Activated CD8-positive, alpha-beta T cell treated with anti-CD3 and anti-CD28 coated beads for 36 hours (primary cell): ENCODE measurements at regions of chr10 and their contacts with region 1.

Region 1: DNA sequence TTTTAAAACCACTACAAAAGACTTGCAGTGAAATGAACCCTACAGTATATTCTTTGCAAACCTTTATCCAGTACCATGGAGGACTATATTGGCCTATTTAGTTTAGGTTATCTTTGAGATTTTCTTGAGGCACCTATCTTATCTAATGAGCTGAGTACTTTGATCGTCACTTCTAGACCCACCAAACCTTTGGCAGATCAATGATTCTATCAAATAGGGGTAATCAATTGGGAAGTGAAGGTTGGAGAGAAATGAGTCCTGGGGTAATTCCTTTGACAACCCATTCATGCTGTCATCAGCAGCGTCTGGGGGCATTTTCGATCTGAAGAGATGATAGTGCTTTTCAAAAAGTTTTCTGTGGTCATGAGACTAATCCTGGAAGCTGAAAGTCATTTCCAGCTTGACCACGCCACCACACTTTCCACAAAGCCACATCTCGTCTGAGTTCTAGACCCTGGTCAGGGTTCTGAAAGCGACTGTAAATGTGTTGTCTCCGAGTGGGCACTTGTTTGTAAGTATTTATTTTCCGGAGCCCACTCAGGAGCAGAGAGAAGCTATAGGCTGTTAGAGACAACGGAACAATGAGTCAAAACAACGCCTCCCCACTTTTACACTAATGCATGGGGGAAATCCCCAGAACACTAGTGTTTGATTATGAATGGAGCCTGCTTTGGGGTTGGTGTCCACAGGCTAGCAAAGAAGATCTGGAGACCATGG is 4.8 kb downstream of the EGR2 start:
- DNase-seq: peak; percentile 96
- ATAC-seq: peak; percentile 47
- H3K4me3 Mint-ChIP-seq: peak overlapping the region; percentile 97
- H3K27ac Mint-ChIP-seq: peak overlapping the region; percentile 67
- H3K4me1 Mint-ChIP-seq: peaks cover 73% of the 10 kb centered on the region
- H3K27me3 Mint-ChIP-seq: no peaks in the 10 kb centered on the region
- CTCF ChIP-seq: no peak

Region 2: DNA sequence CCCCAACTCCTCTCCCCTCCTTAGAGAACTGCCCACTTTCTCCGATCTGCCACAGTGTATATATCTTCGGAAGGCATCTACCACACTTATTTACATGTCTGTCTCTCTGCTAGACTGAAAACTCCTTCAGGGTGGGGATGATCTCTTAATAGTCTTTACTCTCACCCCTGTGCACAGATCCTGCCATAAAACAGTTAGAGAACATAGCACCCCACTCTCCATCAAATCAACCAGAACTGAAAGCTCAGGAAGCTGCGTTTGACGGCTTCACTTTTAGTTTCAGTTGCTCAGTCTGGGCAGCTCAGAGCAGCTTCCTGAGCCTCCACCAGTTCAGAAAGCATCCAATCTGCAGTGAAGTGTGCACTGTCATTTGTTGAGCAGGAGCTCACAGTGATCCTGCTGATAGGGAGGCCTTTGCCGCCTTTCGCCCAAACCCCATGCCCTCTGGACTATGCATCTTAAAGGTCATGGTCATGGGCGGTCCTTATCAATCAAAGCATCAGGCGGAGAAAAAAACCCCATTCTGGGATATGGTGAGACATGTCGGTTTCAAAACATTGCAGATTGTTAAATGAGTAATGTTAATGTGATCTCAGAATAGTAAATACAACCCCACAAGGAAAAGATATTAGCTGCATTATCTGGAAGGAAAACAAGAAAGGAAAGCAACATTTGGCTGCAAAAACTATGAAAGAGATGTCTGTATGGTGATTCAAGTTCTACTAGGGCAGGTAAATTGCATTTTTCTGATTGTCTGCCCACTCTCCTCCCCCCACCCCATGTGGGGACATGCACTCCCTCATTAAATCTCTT is 173.9 kb before region 1 on chr10:
- CTCF ChIA-PET with region 1: interaction called, 12 read pairs
- POLR2A ChIA-PET with region 1: interaction called, 18 read pairs
- intact Hi-C with region 1: loop called (anchors 1 kb)
- DNase-seq: peak; percentile 90
- ATAC-seq: peak; percentile 93
- H3K4me3 Mint-ChIP-seq: no peak overlapping the region
- H3K27ac Mint-ChIP-seq: no peak overlapping the region
- H3K4me1 Mint-ChIP-seq: peaks cover 25% of the 10 kb centered on the region
- H3K27me3 Mint-ChIP-seq: no peaks in the 10 kb centered on the region
- CTCF ChIP-seq: no peak

Region 3: DNA sequence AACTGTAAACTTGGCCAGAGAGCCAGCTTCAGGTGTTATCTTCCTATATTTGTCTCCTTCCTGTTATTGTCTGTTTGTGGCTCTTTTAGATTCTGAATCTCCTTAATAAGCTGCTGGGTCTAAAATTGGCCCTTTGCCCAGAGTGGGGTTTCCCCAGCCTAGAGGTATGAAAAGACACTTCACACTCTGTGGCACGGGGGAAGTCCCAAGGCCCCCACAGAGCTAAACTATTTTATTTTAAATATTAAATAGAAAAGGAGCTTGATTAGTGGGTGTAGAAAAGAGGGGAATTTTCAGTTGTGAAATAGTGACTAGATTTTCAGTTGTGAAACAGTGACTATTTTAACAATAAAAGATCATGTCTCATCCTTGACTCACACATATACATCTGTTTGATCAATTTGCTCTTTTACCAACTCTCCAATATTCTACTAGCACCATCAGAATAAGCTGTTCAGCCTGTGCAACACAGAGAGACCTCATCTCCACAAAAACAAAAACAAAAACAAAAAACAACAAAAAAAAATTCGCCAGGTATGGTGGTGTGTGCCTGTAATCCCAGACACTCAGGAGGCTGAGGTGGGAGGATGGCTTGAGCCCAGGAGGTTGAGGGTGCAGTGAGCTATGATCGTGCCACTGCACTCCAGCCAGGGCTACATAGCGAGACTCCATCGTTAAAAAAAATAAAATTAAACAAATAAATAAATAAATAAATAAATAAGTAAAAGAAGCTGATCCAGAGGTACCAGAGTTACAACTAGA is 31.6 kb before region 1 on chr10:
- CTCF ChIA-PET with region 1: interaction called, 6 read pairs
- POLR2A ChIA-PET with region 1: interaction called, 16 read pairs
- intact Hi-C with region 1: loop called (anchors 1 kb)
- DNase-seq: peak; percentile 98
- ATAC-seq: peak; percentile 94
- H3K4me3 Mint-ChIP-seq: no peak overlapping the region
- H3K27ac Mint-ChIP-seq: peak overlapping the region; percentile 80
- H3K4me1 Mint-ChIP-seq: peaks cover 44% of the 10 kb centered on the region
- H3K27me3 Mint-ChIP-seq: no peaks in the 10 kb centered on the region
- CTCF ChIP-seq: no peak